ENCODE measurements at regions of chr10 and their contacts with region 1.

Region 1: DNA sequence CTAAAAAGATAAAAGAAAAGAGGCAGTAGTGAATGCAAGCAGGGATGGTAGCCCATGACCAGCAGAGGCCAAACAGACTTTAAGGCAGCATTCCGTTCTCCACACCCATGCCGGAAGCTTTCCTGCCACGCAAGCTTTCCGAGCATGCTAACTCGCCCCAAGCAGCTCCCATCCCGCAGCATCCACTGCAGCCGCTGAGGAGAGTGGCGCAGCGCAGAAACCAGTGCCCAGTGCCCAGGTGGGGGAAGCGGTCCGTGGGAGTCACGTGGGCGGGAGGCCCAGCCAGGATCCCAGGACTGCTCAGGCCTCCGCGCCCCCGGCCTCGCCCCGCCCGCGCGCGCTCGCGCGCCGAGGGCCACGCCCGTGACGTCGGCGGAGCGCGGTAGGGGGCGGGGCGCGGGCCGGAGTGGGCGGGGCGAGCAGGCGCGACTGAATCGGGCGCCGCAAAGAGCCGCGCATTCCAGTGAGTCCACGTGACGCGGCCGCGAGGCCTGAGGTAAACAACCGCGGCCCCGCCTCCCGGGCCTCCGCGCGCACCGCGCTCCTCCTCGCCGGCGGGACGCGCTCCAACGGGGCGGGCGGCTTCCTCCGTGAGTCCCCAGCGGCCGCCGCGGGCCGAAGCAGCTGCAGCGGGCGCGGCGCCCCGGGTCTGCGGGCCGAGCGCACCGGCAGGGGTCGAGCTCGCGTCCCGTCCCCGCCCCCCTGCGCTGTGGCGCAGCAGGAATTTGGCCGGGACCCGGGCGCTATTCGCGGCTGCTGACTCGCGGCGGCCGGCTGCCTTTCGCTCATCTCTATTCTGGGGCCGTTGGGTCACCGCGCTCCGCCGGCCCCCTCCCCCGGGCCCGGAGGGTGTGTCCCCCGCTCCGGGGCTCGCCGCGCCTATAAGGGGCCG is at the start of gene OTUD1:
- DNase-seq: peak; percentile 93
- ATAC-seq: peak; percentile 77 to 84
- H3K4me3 ChIP-seq: peak within 1 kb of the TSS; percentile 63 to 81 (median 72)
- H3K27ac ChIP-seq: peak within 1 kb of the TSS; percentile 91 to 95 (median 92)
- H3K4me1 ChIP-seq: peaks cover 20 to 26% of the 10 kb centered on the region in 2 donors
- H3K27me3 ChIP-seq: no peaks in the 10 kb centered on the region
- CTCF ChIP-seq: peak in 4 of 5 experiments; percentile 14 to 36 (median 25)
- POLR2A ChIP-seq: no peak
- total RNA-seq, gene OTUD1: 5.3 to 16.9 (median 7.7) TPM

Region 2: DNA sequence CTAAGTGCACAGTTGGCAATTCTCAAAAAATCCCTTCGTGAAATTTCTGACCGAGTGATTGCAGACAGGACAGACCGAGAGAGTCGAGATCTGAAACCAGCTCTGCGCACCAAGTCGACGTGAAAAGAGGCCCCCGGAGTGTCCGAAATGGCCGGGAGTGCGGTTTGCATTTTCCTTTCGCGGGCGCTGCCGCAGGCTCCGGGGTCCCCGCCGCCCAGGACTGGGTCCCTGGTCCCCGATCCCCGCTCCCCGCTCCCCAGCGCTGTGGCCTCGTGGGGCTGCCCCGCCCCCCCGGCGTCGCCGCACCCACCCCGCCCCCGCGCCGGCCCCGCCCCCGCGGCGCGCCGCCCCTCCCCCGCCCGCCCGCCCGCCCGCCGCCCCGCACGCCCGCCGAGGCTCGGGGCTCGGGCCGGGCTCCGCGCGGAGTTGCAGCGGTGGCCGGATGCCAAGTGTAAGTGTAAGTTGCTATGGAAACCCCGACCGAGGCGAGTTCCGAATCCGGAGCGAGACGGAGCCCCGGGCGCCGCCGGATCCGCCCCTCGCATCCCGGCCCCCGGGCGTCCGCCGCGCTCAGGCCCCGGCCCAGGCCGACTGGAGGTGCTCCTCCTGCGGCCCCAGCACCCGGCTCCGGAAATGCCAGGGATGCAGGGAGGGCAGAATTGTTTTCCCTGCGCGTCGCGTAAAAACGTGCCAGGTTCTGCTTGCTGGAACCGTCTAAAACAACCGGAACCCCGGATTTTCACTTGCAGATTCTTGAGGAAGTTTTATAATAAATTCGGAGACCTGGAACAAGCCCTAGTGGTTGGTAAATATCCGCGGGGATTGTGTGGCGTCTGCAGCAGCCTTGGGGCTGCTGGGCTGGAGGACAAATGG is 1113.3 kb before region 1 on chr10:
- in situ Hi-C with region 1: loop called in 1 of 4 experiments (anchors 25 kb)
- intact Hi-C with region 1: loop called (anchors 10 kb)
- DNase-seq: no peak
- ATAC-seq: no peak
- H3K4me3 ChIP-seq: peak overlapping the region; percentile 57 to 64 (median 64)
- H3K27ac ChIP-seq: peak overlapping the region; percentile 43 to 67 (median 60)
- H3K4me1 ChIP-seq: peaks cover 28 to 36% of the 10 kb centered on the region in 2 donors
- H3K27me3 ChIP-seq: peaks cover 10 to 25% (median 23%) of the 10 kb centered on the region in 3 donors
- CTCF ChIP-seq: no peak
- POLR2A ChIP-seq: no peak

Region 3: GRCh38 chr10:23344241-23344841 is 94.5 kb before region 1 on chr10 and contains the start of gene C10orf67:
- in situ Hi-C with region 1: no loop called
- intact Hi-C with region 1: loop called (anchors 1 kb)
- DNase-seq: peak in 1 of 2 donors; percentile 14
- ATAC-seq: peak in 1 of 2 donors; percentile 49
- H3K4me3 ChIP-seq: peak within 1 kb of the TSS; percentile 55 to 79 (median 60)
- H3K27ac ChIP-seq: peak within 1 kb of the TSS in 2 of 4 donors; percentile 19 to 31
- H3K4me1 ChIP-seq: peaks cover 16 to 17% of the 10 kb centered on the region in 2 donors
- H3K27me3 ChIP-seq: no peaks in the 10 kb centered on the region
- CTCF ChIP-seq: no peak
- POLR2A ChIP-seq: no peak
- total RNA-seq, gene C10orf67: 0.09 TPM in 1 of 4 donors, not detected in the others

Region 4: DNA sequence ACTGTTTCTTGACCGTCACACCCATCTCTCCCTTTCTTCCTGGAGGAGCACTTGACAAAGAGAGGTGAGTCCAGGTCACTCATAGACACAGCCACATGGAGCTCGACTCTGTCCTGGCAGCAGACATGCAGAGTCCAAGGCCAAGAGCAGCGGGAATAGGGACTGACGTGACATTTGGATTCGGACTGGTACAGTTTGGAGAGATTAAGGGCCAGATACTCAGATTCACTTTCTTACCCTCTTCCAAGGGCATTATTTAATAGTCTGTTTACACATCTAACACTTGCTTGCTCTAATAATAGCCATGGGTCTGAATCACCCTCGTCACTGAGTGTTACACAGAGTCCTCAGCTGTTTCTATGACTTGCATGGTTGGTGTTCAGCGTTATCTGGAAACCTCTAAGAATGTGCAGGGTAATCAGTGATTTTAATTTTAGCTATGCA is 39.1 kb before region 1 on chr10:
- in situ Hi-C with region 1: no loop called
- intact Hi-C with region 1: loop called (anchors 1 kb)
- DNase-seq: peak; percentile 89 to 94
- ATAC-seq: peak; percentile 96
- H3K4me3 ChIP-seq: no peak overlapping the region
- H3K27ac ChIP-seq: peak overlapping the region; percentile 74 to 86 (median 82)
- H3K4me1 ChIP-seq: peaks cover 26 to 37% of the 10 kb centered on the region in 2 donors
- H3K27me3 ChIP-seq: no peaks in the 10 kb centered on the region
- CTCF ChIP-seq: no peak
- POLR2A ChIP-seq: peak in 1 of 2 donors; percentile 48

Region 5: DNA sequence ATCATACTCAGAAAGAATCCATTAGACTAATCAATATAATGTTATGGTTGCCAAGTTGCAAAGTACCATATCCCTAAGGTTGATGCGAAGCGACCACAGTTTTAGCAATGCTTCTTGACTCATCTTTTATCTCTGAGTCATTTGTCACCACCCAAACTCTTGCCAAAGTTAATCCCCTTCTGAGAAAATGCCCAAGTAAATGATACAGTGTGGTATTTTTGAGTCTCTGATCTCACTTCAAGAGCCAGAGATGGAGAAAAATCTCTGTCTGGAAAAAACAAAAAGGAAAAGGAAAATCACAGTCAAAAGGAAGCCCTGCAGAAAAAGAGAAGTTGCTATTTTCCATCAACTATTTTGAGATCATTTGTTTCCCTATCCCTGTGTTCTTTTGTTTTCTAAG is 26.6 kb before region 1 on chr10:
- in situ Hi-C with region 1: no loop called
- intact Hi-C with region 1: loop called (anchors 1 kb)
- DNase-seq: no peak
- ATAC-seq: peak; percentile 92 to 93
- H3K4me3 ChIP-seq: no peak overlapping the region
- H3K27ac ChIP-seq: peak overlapping the region; percentile 19 to 72 (median 36)
- H3K4me1 ChIP-seq: peaks cover 0 to 10% of the 10 kb centered on the region in 2 donors
- H3K27me3 ChIP-seq: no peaks in the 10 kb centered on the region
- CTCF ChIP-seq: no peak
- POLR2A ChIP-seq: no peak